PC-9 (cell line): ENCODE measurements at regions of chr17 and their contacts with region 1.

Region 1: DNA sequence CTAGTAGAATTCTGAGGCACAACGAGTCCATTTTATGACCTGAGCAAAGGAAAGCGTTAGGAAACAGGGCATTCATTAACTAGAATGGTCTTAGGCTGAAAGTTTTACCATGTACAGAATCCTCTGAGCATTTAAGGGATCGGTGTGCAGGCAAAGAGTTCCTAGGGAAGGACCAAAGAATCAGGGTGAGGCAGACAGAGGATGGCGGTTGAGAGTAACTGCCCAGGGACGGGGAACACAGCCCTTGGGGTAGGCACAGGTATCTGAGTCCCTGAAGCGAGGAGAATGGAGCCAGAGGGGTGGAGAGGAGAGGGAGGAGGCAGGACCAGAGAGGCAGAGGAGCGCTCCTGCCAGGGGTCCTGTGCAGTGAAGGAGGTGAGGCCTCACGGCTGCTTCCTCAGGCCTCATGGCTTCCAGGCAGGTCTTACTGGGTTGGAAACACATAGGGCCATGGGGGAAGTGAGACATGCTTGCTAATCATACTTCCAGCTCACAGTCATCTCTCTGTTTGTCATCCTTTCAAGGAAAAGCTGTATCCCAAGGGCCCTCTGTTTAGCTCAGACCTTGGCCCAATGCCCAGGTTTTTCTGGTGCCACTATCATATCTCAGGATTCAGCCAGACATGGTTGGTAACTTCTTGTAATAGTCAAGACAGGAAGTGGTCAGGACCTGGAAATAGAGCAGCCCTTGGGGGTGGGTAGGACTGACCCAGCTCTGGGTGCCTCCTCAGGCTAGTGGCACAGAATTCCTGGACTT is 13.8 kb upstream of the ITGB3 start:
- DNase-seq: peak; percentile 87 to 97
- H3K4me3 ChIP-seq: no peak overlapping the region
- H3K27ac ChIP-seq: peak overlapping the region; percentile 79
- H3K4me1 ChIP-seq: peaks cover 29% of the 10 kb centered on the region
- H3K27me3 ChIP-seq: no peaks in the 10 kb centered on the region
- CTCF ChIP-seq: no peak

Region 2: GRCh38 chr17:47279062-47279736 is 39.4 kb after region 1 on chr17:
- CTCF ChIA-PET with region 1: no interaction called
- POLR2A ChIA-PET with region 1: interaction called, 4 read pairs
- intact Hi-C with region 1: loop called (anchors 5 kb)
- DNase-seq: peak; percentile 75 to 99
- H3K4me3 ChIP-seq: no peak overlapping the region
- H3K27ac ChIP-seq: peak overlapping the region; percentile 87
- H3K4me1 ChIP-seq: peaks cover 70% of the 10 kb centered on the region
- H3K27me3 ChIP-seq: no peaks in the 10 kb centered on the region
- CTCF ChIP-seq: no peak